G401 (cell line): ENCODE measurements at regions of chr17 and their contacts with region 1.

Region 1: GRCh38 chr17:40177275-40177874 is at the start of gene RAPGEFL1:
- DNase-seq: peak; percentile 79
- total RNA-seq, gene RAPGEFL1: 1.1 and 2.6 TPM in 2 replicates

Region 2: GRCh38 chr17:40069751-40070708 is 107.3 kb before region 1 on chr17:
- in situ Hi-C with region 1: loop called (anchors 5 kb)
- DNase-seq: peak; percentile 78

Region 3: GRCh38 chr17:40281663-40282062 is 104.3 kb after region 1 on chr17:
- in situ Hi-C with region 1: no loop called
- DNase-seq: no peak